HepG2 (cell line): ENCODE measurements at regions of chr16 and their contacts with region 1.

Region 1: GRCh38 chr16:87822108-87822970 is 47.0 kb downstream of the SLC7A5 start:
- DNase-seq: no peak
- ATAC-seq: no peak
- H3K4me3 ChIP-seq: no peak overlapping the region
- H3K27ac ChIP-seq: no peak overlapping the region
- H3K4me1 ChIP-seq: peaks cover 70% of the 10 kb centered on the region
- H3K27me3 ChIP-seq: peaks cover 13 to 69% of the 10 kb centered on the region in 2 experiments
- CTCF ChIP-seq: no peak
- EP300 ChIP-seq: no peak
- POLR2A ChIP-seq: no peak
- RAD21 ChIP-seq: no peak

Region 2: DNA sequence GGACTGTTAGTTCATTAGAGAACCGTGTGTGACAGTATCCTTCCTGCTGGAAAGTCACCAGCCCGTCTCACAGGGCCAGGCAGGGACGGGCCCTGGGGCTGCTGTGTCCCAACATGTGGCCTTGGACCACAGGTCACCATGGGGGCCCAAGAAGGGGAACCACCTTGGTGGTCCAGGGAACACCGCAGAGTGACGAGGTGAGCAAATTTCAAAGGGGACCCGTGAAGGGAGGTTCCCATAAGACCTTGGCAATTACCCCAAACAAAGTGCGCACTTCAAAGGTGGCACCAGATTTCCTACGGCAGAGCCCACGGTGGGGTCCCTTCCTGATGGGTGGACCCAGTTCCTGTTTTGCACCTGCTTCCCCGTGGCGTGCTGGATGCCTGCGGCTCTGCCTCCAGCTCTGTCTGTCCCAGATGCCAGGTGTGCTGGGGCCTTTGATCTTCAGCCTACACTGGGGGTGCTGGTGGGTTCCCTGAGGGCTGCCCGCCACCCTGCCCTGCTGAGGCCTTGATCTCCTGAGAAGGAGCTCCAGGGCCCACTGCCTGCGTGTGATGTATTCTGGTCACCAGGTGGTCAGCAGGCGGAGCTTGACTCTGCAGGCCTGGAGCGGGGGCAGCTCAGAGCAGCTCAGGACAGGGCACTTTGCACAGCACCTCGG is 20.0 kb after region 1 on chr16:
- CTCF ChIA-PET with region 1: no interaction called
- POLR2A ChIA-PET with region 1: interaction called, 10 read pairs
- in situ Hi-C with region 1: no loop called
- intact Hi-C with region 1: no loop called
- DNase-seq: peak; percentile 51
- ATAC-seq: peak; percentile 18
- H3K4me3 ChIP-seq: no peak overlapping the region
- H3K27ac ChIP-seq: peak overlapping the region; percentile 76
- H3K4me1 ChIP-seq: peaks cover 90% of the 10 kb centered on the region
- H3K27me3 ChIP-seq: no peaks in the 10 kb centered on the region
- CTCF ChIP-seq: no peak
- EP300 ChIP-seq: peak; percentile 41 to 66; a peak in 3 of 4 replicates
- POLR2A ChIP-seq: 0 out of 4 replicates have a peak, but pooled peaks of 1 of the 2 experiments have one; percentile 7
- RAD21 ChIP-seq: peak; percentile 7; the same call in 1 of the 2 replicates